Motor neuron (in vitro differentiated cells): ENCODE measurements at regions of chr22 and their contacts with region 1.

Region 1: DNA sequence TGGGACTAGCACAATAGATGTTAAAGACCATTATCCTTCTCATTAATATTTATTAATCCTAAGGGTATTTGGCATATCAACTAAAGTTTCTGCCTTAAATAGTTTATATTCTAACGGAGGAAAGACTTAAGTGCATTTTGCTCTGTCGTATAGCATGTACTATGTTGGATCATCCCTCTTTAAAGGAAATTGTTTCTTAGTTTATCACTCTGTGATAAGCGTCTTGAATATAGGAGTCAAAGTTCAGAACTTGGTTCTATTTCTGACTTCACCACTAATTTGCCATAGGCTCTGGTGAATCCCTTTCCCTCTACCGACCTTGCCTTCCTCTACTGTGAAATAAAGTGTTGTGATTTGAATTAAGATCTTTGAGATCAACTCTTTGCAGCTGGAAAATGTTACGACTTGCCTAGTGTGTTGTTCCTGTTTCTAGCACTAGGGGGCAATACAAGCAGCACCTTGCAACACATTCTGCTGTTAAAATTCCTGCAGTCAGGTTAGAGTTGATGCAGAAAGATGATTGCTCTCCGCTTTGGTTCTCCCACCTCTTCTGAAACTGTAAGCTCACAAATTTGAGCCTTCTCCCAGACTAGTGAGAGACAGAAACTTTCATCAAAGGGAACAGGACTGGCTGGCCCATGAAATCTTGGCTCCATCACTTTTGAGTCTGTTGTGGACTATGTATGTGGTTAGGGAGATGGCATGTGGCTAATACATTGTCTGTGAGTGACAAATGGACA is 27.8 kb upstream of the ZNRF3 start:
- ATAC-seq: peak; percentile 34 to 68 (median 51)
- H3K4me3 ChIP-seq: no peak overlapping the region
- H3K27ac ChIP-seq: no peak overlapping the region
- H3K4me1 ChIP-seq: no peaks in the 10 kb centered on the region

Region 2: DNA sequence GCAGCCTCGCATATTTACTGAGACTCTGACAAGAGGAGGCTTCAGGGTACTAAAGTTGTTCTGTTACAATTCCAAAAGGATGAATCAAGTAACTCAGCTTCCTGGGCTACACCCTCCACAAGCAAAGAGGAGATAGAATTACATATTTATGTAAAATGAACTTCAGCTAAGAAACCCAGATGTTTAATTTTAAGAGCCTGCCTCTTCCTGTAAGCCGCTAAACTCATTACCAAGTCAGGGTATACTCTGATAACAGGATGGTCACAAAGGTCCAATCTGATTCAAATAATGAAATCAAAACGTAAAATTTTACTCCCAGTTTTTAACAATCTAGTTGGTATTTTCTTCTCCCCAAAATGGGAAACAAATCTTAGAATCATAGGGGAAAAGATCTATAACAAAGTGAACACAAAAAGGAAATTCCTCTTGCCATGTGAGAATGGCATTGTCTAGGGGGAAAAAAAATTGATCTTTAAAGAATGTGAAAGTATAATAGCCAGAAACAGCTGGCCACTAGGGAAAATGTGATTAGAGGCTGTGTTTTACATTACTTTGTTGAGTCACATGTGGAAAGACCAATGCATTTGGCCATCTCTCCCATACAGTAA is 144.8 kb before region 1 on chr22:
- in situ Hi-C with region 1: no loop called
- ATAC-seq: peak in 3 of 8 experiments; percentile 81 to 98 (median 82)
- H3K4me3 ChIP-seq: no peak overlapping the region
- H3K27ac ChIP-seq: no peak overlapping the region
- H3K4me1 ChIP-seq: no peaks in the 10 kb centered on the region

Region 3: DNA sequence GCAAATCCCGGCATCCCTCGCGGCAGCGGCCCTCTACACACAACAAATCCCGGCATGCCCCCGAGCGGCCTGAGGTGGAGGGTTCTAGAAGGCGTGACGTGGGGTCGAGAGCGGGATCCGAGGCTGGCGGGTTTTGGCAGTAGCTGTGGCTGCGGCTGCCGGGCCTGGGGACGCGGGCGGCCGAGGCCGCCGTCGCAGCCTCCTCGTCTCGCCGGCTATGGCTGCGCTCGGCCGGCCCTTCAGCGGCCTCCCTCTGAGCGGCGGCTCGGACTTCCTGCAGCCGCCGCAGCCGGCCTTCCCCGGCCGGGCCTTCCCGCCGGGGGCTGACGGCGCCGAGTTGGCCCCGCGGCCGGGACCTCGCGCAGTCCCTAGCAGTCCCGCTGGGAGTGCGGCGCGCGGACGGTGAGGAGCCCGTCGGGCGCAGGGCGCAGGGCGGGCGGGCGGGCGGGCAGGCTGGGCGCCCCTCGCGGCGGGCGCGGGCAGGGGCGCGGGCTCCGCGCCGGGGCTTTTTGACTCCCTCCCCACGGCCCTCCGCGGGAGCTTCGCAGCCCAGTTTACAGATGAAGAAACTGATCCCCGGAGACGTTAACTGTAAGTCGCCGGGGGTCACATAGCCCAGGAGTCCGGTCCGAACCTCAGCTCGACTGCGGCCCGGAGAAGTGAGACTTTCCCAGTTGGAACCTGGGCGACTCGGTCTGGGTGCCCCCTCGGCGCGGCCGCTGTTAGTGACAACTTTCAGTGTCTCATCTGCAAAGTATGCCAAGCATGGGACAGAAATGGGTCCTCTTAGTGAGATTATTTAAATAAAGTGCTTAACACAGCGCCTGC is 82.7 kb before region 1 on chr22 and contains the start of gene CCDC117:
- in situ Hi-C with region 1: loop called in 1 of 9 experiments (anchors 25 kb)
- ATAC-seq: peak; percentile 85 to 97 (median 94)
- H3K4me3 ChIP-seq: peak within 1 kb of the TSS; percentile 83 to 96 (median 89)
- H3K27ac ChIP-seq: peak within 1 kb of the TSS; percentile 93 to 99
- H3K4me1 ChIP-seq: peaks cover 0 to 3% of the 10 kb centered on the region in 2 donors
- total RNA-seq, gene CCDC117: 14.1 to 23.8 (median 16.4) TPM

Region 4: GRCh38 chr22:28951969-28952521 is 96.5 kb after region 1 on chr22:
- in situ Hi-C with region 1: no loop called
- ATAC-seq: peak in 3 of 8 experiments; percentile 55 to 75 (median 74)
- H3K4me3 ChIP-seq: no peak overlapping the region
- H3K27ac ChIP-seq: no peak overlapping the region
- H3K4me1 ChIP-seq: peaks cover 3 to 11% of the 10 kb centered on the region in 2 donors

Region 5: DNA sequence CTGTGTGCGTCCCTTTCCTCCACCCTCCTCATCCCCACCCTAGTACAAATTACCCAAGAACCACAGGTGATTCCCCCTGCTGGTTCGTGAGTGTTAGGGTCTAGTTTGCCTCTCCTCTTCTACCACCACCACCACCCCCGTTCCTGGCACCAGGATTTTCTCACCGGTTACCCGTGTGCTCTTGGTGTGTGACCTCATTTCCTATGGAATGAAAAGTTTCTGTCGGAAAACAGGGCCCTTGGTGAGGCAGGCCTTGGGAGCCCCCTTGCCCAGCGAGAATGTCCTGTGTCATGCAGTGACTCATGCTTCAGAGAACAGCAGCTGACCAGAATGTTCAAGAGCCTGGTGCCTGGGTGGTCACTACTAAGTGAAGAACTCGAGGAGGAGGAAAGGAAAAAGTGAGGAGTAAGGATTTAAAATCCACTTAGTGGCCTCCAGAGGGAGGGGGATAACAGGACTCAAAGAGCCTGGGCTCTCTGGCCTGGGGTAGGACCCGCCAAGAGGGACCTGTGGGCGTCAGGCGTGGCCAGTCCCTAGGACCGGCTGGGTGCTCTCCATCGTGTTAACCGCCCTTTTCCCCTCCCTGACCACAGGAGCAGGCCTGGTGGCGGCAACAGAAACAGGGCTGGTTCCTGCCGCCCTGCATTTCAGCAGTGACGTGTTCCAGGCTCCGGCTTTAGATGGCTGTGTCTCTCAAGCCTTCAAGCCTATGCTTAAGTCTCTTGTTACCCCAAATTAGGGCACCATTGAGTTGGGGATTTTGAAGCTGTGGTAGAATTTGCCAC is 175.9 kb after region 1 on chr22:
- in situ Hi-C with region 1: loop called in 8 of 9 experiments (anchors 10 to 25 kb)
- ATAC-seq: peak; percentile 52 to 93 (median 88)
- H3K4me3 ChIP-seq: peak overlapping the region in 3 of 5 donors; percentile 24 to 29 (median 25)
- H3K27ac ChIP-seq: peak overlapping the region in 1 of 2 donors; percentile 40
- H3K4me1 ChIP-seq: peaks cover 14 to 20% of the 10 kb centered on the region in 2 donors

Region 6: GRCh38 chr22:29149841-29150555 is 294.5 kb after region 1 on chr22:
- in situ Hi-C with region 1: loop called in 1 of 9 experiments (anchors 10 kb)
- ATAC-seq: peak in 4 of 8 experiments; percentile 11 to 33 (median 23)
- H3K4me3 ChIP-seq: no peak overlapping the region
- H3K27ac ChIP-seq: no peak overlapping the region
- H3K4me1 ChIP-seq: peaks cover 35 to 42% of the 10 kb centered on the region in 2 donors

Region 7: DNA sequence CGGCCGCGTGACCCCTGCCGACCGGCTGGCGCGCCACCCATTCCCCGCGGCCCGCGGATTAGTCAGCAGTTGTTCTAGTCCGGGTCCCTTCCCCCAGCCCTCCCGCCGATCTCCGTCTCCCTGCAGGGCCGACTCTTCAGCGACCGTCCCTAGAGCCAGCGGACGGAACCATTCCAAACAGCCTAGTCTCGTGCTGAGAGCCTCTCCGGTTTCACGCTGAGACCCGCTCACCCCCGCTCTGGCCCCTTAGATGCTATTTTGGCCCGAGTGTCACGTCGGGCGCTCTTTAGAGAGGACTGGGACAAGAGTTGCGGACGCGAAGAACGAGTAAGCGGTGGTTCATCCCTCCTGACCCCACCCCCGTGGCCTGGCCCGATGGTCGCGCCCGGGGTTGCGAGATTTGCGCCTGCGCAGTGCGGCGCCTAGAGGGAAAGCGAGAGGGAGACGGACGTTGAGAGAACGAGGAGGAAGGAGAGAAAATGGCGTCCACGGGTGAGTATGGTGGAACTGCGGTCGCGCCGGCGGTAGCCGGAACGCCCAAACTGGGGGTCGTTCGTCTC is 412.4 kb after region 1 on chr22 and contains the starts of genes EWSR1 and RHBDD3:
- in situ Hi-C with region 1: loop called in 1 of 9 experiments (anchors 25 kb)
- ATAC-seq: peak; percentile 75 to 92 (median 89)
- H3K4me3 ChIP-seq: peak within 1 kb of the TSS; percentile 79 to 99 (median 92)
- H3K27ac ChIP-seq: peak within 1 kb of the TSS; percentile 100
- H3K4me1 ChIP-seq: peaks cover 26 to 30% of the 10 kb centered on the region in 2 donors
- total RNA-seq, gene EWSR1: 134 to 362 (median 188) TPM
- total RNA-seq, gene RHBDD3: 32.4 to 65.1 (median 42.0) TPM